CD8-positive, alpha-beta T cell (primary cell): ENCODE measurements at regions of chr19 and their contacts with region 1.

Region 1: DNA sequence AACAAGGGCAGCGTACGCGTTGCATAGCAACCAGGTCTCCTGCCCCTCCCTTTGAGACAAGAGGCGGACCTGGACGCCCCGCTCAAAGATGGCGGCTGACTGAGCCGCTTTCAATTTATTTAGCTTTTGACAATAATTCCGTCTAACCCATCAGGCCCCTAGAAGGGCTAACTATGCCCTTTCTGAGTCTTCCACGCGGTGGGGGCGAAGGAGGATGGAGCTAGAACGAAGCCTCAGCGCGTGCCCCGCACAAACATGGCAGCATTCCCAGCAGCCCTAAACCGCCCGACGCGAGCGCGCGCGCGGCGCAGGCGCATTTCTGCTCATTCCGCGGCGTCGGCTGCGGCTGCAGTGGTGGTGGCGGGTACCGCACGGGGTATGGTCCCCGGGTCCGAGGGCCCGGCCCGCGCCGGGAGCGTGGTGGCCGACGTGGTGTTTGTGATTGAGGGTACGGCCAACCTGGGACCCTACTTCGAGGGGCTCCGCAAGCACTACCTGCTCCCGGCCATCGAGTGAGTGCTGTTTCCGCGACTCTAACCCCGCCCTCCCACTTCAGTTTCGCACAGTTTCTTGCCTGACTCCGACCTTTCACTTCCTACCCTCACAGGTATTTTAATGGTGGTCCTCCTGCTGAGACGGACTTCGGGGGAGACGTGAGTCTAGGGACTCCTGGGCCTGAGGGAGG is at the start of gene MED25:
- DNase-seq: peak; percentile 78 to 94 (median 87)
- ATAC-seq: peak; percentile 64
- H3K4me3 ChIP-seq: peak within 1 kb of the TSS; percentile 85 to 91
- H3K4me3 Mint-ChIP-seq: peak within 1 kb of the TSS; percentile 99
- H3K27ac ChIP-seq: peak within 1 kb of the TSS; percentile 95 to 98
- H3K27ac Mint-ChIP-seq: peak within 1 kb of the TSS; percentile 100
- H3K4me1 ChIP-seq: peaks cover 13% of the 10 kb centered on the region
- H3K4me1 Mint-ChIP-seq: peaks cover 30% of the 10 kb centered on the region
- H3K27me3 ChIP-seq: no peaks in the 10 kb centered on the region
- H3K27me3 Mint-ChIP-seq: no peaks in the 10 kb centered on the region
- CTCF ChIP-seq: peak; percentile 19
- total RNA-seq, gene MED25: 41.9 to 42.1 TPM

Region 2: GRCh38 chr19:48872182-48872883 is 945.8 kb before region 1 on chr19 and contains the start of gene PPP1R15A:
- CTCF ChIA-PET with region 1: no interaction called
- POLR2A ChIA-PET with region 1: no interaction called
- intact Hi-C with region 1: loop called in 1 of 2 experiments (anchors 10 kb)
- DNase-seq: peak; percentile 95 to 99 (median 98)
- ATAC-seq: peak; percentile 41
- H3K4me3 ChIP-seq: peak within 1 kb of the TSS; percentile 88 to 90
- H3K4me3 Mint-ChIP-seq: peak within 1 kb of the TSS; percentile 97
- H3K27ac ChIP-seq: peak within 1 kb of the TSS; percentile 98 to 99
- H3K27ac Mint-ChIP-seq: peak within 1 kb of the TSS; percentile 100
- H3K4me1 ChIP-seq: peaks cover 32% of the 10 kb centered on the region
- H3K4me1 Mint-ChIP-seq: peaks cover 34% of the 10 kb centered on the region
- H3K27me3 ChIP-seq: no peaks in the 10 kb centered on the region
- H3K27me3 Mint-ChIP-seq: no peaks in the 10 kb centered on the region
- CTCF ChIP-seq: no peak
- total RNA-seq, gene PPP1R15A: 398 to 399 TPM

Region 3: DNA sequence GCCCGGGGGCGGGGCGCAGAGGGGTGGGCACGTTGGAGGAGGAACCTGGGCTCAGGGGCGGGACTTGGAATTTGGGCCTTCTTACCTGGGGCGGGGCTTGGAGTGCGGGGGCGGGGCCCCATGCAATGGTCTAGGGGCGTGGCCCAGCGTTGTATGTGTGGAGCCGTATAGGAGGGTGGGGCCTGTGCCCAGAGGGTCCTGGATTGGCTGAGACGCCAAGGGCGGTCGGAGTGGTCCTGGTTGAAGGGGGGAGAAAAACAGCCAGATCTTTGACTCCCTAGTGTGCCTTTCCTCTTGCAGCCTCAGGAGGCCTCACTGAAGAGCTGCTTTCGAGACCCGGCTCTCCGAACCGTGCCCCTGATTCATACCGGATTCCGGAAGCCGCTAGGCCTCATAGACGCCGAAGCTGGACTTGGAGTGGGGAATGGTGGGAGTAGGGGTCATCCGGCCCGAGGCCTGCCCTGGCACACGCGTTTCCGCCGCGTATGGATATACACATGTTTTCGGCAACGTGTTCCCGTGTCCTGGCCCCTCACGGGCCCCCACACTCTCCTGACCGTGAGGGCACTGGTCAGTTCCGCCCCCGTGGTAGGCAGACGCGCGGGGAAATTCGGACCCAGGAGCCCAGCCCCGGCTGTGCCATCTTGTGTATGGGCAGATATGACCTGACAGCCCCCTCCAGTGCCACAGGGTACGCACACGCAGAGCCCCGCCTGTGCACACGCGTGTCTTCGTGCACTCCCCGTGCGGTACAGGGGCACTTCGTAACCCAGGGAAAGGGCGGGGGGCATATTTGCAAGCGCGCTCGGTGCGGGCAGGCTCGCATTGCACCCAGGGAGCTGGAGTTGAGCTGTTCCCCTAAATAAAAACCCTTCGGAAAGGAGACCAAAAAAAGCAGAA is 227.8 kb before region 1 on chr19:
- CTCF ChIA-PET with region 1: no interaction called
- POLR2A ChIA-PET with region 1: no interaction called
- intact Hi-C with region 1: loop called (anchors 5 kb)
- DNase-seq: peak; percentile 90 to 98 (median 94)
- ATAC-seq: peak; percentile 77
- H3K4me3 ChIP-seq: peak overlapping the region; percentile 78 to 97
- H3K4me3 Mint-ChIP-seq: peak overlapping the region; percentile 91
- H3K27ac ChIP-seq: peak overlapping the region; percentile 82 to 83
- H3K27ac Mint-ChIP-seq: peak overlapping the region; percentile 91
- H3K4me1 ChIP-seq: peaks cover 23% of the 10 kb centered on the region
- H3K4me1 Mint-ChIP-seq: peaks cover 36% of the 10 kb centered on the region
- H3K27me3 ChIP-seq: no peaks in the 10 kb centered on the region
- H3K27me3 Mint-ChIP-seq: no peaks in the 10 kb centered on the region
- CTCF ChIP-seq: peak; percentile 29

Region 4: GRCh38 chr19:49718511-49718910 is 99.6 kb before region 1 on chr19:
- CTCF ChIA-PET with region 1: interaction called, 6 read pairs
- POLR2A ChIA-PET with region 1: interaction called, 7 read pairs
- intact Hi-C with region 1: loop called (anchors 1 to 2 kb)
- DNase-seq: no peak
- ATAC-seq: no peak
- H3K4me3 ChIP-seq: no peak overlapping the region
- H3K4me3 Mint-ChIP-seq: peak overlapping the region; percentile 92
- H3K27ac ChIP-seq: no peak overlapping the region
- H3K27ac Mint-ChIP-seq: peak overlapping the region; percentile 14
- H3K4me1 ChIP-seq: peaks cover 4% of the 10 kb centered on the region
- H3K4me1 Mint-ChIP-seq: peaks cover 14% of the 10 kb centered on the region
- H3K27me3 ChIP-seq: no peaks in the 10 kb centered on the region
- H3K27me3 Mint-ChIP-seq: no peaks in the 10 kb centered on the region
- CTCF ChIP-seq: no peak

Region 5: GRCh38 chr19:49850473-49851342 is 32.6 kb after region 1 on chr19 and contains the start of gene PTOV1:
- CTCF ChIA-PET with region 1: interaction called, 4 read pairs
- POLR2A ChIA-PET with region 1: interaction called, 18 read pairs
- intact Hi-C with region 1: loop called (anchors 1 kb)
- DNase-seq: peak; percentile 73 to 94 (median 86)
- ATAC-seq: peak; percentile 87
- H3K4me3 ChIP-seq: peak within 1 kb of the TSS; percentile 98 to 99
- H3K4me3 Mint-ChIP-seq: peak within 1 kb of the TSS; percentile 93
- H3K27ac ChIP-seq: peak within 1 kb of the TSS; percentile 96 to 99
- H3K27ac Mint-ChIP-seq: peak within 1 kb of the TSS; percentile 96
- H3K4me1 ChIP-seq: peaks cover 30% of the 10 kb centered on the region
- H3K4me1 Mint-ChIP-seq: peaks cover 35% of the 10 kb centered on the region
- H3K27me3 ChIP-seq: no peaks in the 10 kb centered on the region
- H3K27me3 Mint-ChIP-seq: no peaks in the 10 kb centered on the region
- CTCF ChIP-seq: no peak
- total RNA-seq, gene PTOV1: 112 to 116 TPM

Region 6: DNA sequence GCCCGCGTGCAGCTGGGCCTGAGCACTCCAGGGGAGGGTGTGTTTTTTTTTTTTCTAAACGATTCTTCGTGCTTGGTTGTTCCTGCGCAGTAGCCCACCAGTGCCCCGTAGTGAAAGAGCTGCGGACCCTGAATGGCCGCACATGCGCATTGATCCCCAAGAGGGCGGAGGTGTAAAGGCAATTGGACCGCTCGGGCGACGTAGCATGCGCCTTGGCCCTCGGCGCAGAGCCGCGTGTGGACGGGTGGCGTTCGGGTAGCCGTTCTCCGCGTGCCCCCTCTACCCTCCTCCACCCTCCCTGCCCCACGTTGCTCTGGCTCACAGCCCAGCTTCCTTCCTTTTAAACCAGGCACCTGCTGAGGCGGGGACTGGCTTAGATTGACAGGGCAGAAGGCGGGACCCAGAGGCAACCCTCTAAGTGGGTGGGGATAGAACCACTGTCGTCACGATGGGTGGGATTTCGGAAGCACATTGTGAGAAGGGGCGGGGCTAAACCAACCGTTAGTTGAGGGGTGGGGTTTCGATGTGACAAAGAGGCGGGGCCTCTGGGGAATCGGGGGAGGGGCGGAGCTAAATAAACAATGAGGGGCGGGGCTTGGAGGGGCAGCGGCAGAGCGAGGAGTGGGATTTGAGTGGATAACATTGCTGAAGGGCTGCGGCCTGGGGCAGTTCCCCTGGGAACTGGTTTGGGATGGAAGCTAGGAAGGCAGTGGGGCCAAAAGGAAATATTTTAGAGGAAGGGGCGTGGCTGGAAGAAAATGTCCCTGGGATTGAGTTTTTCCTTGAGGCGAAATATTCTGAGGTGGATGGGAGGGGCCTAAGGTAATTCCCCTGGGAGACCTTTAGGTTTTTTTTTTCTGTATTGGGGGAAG is 111.7 kb after region 1 on chr19:
- CTCF ChIA-PET with region 1: no interaction called
- POLR2A ChIA-PET with region 1: no interaction called
- intact Hi-C with region 1: loop called (anchors 1 to 2 kb)
- DNase-seq: peak; percentile 83 to 98 (median 91)
- ATAC-seq: peak; percentile 89
- H3K4me3 ChIP-seq: peak overlapping the region; percentile 90 to 100
- H3K4me3 Mint-ChIP-seq: peak overlapping the region; percentile 98
- H3K27ac ChIP-seq: peak overlapping the region; percentile 83 to 97
- H3K27ac Mint-ChIP-seq: peak overlapping the region; percentile 96
- H3K4me1 ChIP-seq: peaks cover 35% of the 10 kb centered on the region
- H3K4me1 Mint-ChIP-seq: peaks cover 65% of the 10 kb centered on the region
- H3K27me3 ChIP-seq: no peaks in the 10 kb centered on the region
- H3K27me3 Mint-ChIP-seq: no peaks in the 10 kb centered on the region
- CTCF ChIP-seq: no peak

Region 7: DNA sequence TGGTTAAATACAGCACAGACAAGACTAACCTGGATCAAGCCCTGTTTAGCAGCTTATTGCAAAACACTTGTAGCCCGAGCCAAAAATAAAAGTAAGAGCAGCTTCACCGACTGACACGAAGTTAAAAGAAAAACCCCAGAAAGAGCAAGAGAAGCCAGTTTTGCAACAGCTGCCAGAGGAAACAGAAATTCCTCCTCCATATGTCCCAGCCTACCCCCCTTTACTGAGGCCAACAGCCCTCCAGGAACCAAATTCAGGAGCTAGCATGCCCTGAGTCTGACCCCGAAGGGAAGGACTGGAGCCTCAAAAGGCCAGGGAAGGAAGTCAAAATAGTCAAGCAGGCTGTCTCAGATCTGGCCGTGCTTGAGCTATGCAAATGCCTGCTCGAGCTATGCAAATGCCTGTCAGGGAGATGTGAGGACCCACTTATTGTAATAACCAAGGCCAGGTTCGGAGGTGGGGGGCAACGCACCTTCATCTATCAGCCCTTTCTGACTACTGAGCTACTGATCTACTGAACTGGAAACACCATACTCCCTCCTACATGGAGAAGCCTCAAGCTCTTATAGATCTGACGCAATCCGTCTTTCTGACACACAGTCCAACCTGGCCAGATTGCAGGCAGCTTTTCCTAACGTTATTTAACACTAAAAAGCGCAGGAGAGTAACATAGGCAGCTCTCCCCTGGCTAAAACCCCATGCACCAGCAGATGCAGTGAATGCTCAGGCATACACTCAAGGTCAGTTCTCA is 136.1 kb after region 1 on chr19:
- CTCF ChIA-PET with region 1: no interaction called
- POLR2A ChIA-PET with region 1: no interaction called
- intact Hi-C with region 1: no loop called
- DNase-seq: no peak
- ATAC-seq: no peak
- H3K4me3 ChIP-seq: no peak overlapping the region
- H3K4me3 Mint-ChIP-seq: no peak overlapping the region
- H3K27ac ChIP-seq: no peak overlapping the region
- H3K27ac Mint-ChIP-seq: no peak overlapping the region
- H3K4me1 ChIP-seq: no peaks in the 10 kb centered on the region
- H3K4me1 Mint-ChIP-seq: no peaks in the 10 kb centered on the region
- H3K27me3 ChIP-seq: peaks cover 0 to 4% of the 10 kb centered on the region in 2 experiments
- H3K27me3 Mint-ChIP-seq: peaks cover 25% of the 10 kb centered on the region
- CTCF ChIP-seq: no peak

Region 8: GRCh38 chr19:50376166-50377050 is 558.3 kb after region 1 on chr19 and contains the start of gene NR1H2:
- CTCF ChIA-PET with region 1: no interaction called
- POLR2A ChIA-PET with region 1: no interaction called
- intact Hi-C with region 1: loop called in 1 of 2 experiments (anchors 5 kb)
- DNase-seq: peak; percentile 89 to 99 (median 95)
- ATAC-seq: peak; percentile 90
- H3K4me3 ChIP-seq: peak within 1 kb of the TSS; percentile 73 to 93
- H3K4me3 Mint-ChIP-seq: peak within 1 kb of the TSS; percentile 99
- H3K27ac ChIP-seq: peak within 1 kb of the TSS; percentile 99 to 100
- H3K27ac Mint-ChIP-seq: peak within 1 kb of the TSS; percentile 100
- H3K4me1 ChIP-seq: peaks cover 11% of the 10 kb centered on the region
- H3K4me1 Mint-ChIP-seq: peaks cover 22% of the 10 kb centered on the region
- H3K27me3 ChIP-seq: no peaks in the 10 kb centered on the region
- H3K27me3 Mint-ChIP-seq: no peaks in the 10 kb centered on the region
- CTCF ChIP-seq: no peak
- total RNA-seq, gene NR1H2: 320 to 327 TPM